Common myeloid progenitor, CD34-positive (primary cell): ENCODE measurements at regions of chr2 and their contacts with region 1.

Region 1: DNA sequence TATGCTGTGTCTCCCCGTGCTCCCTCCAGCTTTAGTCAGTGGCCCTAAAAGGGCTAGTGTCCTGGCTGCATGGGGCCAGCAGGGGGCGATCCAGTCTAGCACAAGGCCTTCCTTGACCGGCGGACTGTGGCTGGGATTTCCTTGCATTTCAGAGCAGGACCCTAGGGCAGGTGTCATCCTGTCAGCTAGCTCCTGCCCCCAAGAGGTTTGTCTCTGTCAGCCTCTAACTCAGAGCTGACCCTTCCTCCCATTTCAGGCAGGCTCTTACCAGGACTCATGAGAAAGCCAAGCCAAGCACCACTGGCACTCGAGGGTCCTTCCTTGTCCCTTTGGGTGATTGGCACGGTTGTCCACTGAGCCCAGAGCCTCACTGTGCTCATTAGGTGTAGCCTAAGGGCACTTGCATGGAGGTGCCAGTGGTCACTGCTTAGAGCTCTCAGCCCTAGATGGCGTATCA is 140.3 kb downstream of the RPIA start:
- DNase-seq: peak; percentile 28 to 64 (median 51)
- H3K4me3 ChIP-seq: no peak overlapping the region
- H3K27ac ChIP-seq: no peak overlapping the region
- H3K4me1 ChIP-seq: peaks cover 0 to 9% (median 7%) of the 10 kb centered on the region in 4 experiments
- H3K27me3 ChIP-seq: no peaks in the 10 kb centered on the region

Region 2: DNA sequence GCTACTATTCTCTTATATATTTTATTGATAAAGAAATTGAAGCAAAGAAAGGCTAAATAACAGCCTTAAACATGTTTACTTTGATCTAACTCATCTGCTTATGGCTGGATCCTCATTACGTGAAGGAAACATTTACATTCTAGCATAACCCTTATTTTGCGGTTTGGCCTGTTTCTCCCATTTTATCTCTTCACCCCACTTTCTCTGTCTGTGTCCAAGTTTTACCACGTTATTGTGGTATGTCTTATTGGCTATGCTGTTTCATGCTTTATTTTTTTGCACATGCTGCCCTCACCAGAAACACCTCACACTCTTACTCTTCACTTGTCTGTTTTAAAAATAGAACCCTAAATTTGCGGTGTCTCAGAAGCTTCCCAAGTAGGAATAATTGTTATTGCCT is 61.8 kb before region 1 on chr2:
- CTCF ChIA-PET with region 1: no interaction called
- POLR2A ChIA-PET with region 1: no interaction called
- DNase-seq: peak in 1 of 3 donors; percentile 23
- H3K4me3 ChIP-seq: no peak overlapping the region
- H3K27ac ChIP-seq: no peak overlapping the region
- H3K4me1 ChIP-seq: peaks cover 0 to 14% (median 11%) of the 10 kb centered on the region in 4 experiments
- H3K27me3 ChIP-seq: peaks cover 0 to 10% (median 0%) of the 10 kb centered on the region in 5 experiments

Region 3: DNA sequence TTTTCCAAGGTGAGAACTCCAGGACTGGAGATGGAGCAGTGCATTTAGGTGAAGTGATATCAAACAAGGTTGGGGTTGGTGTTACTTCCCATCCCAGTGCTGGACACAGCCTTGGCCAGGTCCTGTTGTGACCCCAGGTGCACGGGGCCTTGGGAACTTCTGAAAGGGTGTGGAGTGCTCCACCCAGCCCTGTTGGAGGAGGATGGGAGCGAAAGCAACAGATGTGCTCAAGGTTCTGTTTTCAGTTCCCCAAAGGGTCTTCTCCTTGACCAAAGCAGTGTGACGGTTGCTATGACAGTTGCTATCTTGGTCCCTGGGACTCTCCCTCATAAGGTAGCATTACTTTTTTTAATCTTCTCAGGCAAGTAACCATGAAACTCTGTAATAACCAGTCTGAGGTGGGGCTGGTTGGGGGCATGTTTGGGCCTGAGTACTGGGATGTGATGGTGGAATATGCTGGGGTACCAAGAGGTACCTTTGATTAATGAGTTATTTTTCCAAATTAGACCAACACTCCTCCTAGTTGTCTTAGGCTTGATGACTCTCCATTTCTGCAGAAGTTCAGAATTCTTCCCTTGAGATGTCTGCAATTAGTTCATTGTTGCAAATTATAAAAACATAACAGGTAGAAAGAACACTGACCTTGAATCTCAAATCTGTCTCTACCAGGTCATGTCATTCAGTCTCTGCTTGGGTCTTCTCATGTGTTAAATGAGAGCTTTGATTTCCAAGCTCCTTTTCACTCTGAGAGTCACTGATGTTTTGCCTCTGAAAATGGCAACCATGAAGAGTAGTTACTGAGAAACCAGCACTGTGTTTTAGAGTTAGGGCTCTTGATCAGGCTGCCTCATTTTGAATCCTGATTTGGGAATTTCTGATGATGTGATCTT is 14.2 kb after region 1 on chr2:
- CTCF ChIA-PET with region 1: interaction called, 13 read pairs
- POLR2A ChIA-PET with region 1: no interaction called
- DNase-seq: peak in 1 of 3 donors; percentile 30
- H3K4me3 ChIP-seq: no peak overlapping the region
- H3K27ac ChIP-seq: no peak overlapping the region
- H3K4me1 ChIP-seq: no peaks in the 10 kb centered on the region
- H3K27me3 ChIP-seq: no peaks in the 10 kb centered on the region

Region 4: GRCh38 chr2:88857951-88858411 is 26.2 kb after region 1 on chr2:
- CTCF ChIA-PET with region 1: interaction called, 41 read pairs
- POLR2A ChIA-PET with region 1: interaction called, 4 read pairs
- DNase-seq: peak; percentile 44 to 90 (median 89)
- H3K4me3 ChIP-seq: no peak overlapping the region
- H3K27ac ChIP-seq: peak overlapping the region in 1 of 2 experiments; percentile 65
- H3K4me1 ChIP-seq: peaks cover 2 to 27% (median 14%) of the 10 kb centered on the region in 4 experiments
- H3K27me3 ChIP-seq: no peaks in the 10 kb centered on the region